ENCODE measurements at regions of chr9 and their contacts with region 1.

Region 1: GRCh38 chr9:122125158-122125508 is 32.0 kb upstream of the TTLL11 start:
- DNase-seq: peak; percentile 54 to 80 (median 76)
- ATAC-seq: peak; percentile 84
- H3K4me3 ChIP-seq: no peak overlapping the region
- H3K4me3 Mint-ChIP-seq: peak overlapping the region; percentile 21 to 89 (median 60)
- H3K27ac ChIP-seq: no peak overlapping the region
- H3K27ac Mint-ChIP-seq: no peak overlapping the region
- H3K4me1 ChIP-seq: no peaks in the 10 kb centered on the region
- H3K4me1 Mint-ChIP-seq: peaks cover 14 to 21% (median 17%) of the 10 kb centered on the region in 7 donors
- H3K27me3 ChIP-seq: no peaks in the 10 kb centered on the region
- H3K27me3 Mint-ChIP-seq: peaks cover 11 to 43% (median 27%) of the 10 kb centered on the region in 5 donors

Region 2: GRCh38 chr9:120742951-120743416 is 1382.1 kb before region 1 on chr9:
- CTCF ChIA-PET with region 1: no interaction called
- POLR2A ChIA-PET with region 1: no interaction called
- intact Hi-C with region 1: loop called in 1 of 2 experiments (anchors 10 kb)
- DNase-seq: peak in 5 of 9 donors; percentile 5 to 30 (median 13)
- ATAC-seq: peak; percentile 78
- H3K4me3 ChIP-seq: no peak overlapping the region
- H3K4me3 Mint-ChIP-seq: no peak overlapping the region
- H3K27ac ChIP-seq: no peak overlapping the region
- H3K27ac Mint-ChIP-seq: no peak overlapping the region
- H3K4me1 ChIP-seq: no peaks in the 10 kb centered on the region
- H3K4me1 Mint-ChIP-seq: peaks cover 0 to 4% (median 0%) of the 10 kb centered on the region in 7 donors
- H3K27me3 ChIP-seq: no peaks in the 10 kb centered on the region
- H3K27me3 Mint-ChIP-seq: no peaks in the 10 kb centered on the region

Region 3: DNA sequence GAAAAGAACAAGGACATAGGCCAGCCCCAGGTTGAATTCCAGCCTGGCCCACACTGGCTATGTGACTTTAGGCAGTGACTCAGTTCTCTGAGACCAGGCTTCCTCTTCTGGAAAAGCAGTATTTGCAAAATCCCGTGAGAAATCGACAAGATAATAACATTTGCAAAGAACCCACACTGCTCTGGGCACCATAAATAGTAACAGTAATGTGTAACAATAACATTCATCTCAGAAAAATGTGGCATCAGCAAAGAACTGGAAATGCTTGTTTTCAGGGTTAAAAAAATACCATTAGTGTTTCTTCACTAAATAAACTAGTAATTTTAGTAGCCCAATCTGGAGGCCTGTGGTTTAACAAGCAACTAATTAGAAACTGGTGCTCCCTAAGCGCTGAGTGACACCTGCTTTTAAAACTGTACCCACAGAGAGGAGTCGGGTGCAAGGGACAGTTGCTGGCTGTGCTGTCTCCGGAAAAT is 180.4 kb before region 1 on chr9:
- CTCF ChIA-PET with region 1: no interaction called
- POLR2A ChIA-PET with region 1: no interaction called
- intact Hi-C with region 1: no loop called
- DNase-seq: no peak
- ATAC-seq: no peak
- H3K4me3 ChIP-seq: no peak overlapping the region
- H3K4me3 Mint-ChIP-seq: no peak overlapping the region
- H3K27ac ChIP-seq: no peak overlapping the region
- H3K27ac Mint-ChIP-seq: no peak overlapping the region
- H3K4me1 ChIP-seq: no peaks in the 10 kb centered on the region
- H3K4me1 Mint-ChIP-seq: no peaks in the 10 kb centered on the region
- H3K27me3 ChIP-seq: no peaks in the 10 kb centered on the region
- H3K27me3 Mint-ChIP-seq: no peaks in the 10 kb centered on the region

Region 4: GRCh38 chr9:122087406-122088200 is 37.5 kb before region 1 on chr9:
- CTCF ChIA-PET with region 1: no interaction called
- POLR2A ChIA-PET with region 1: no interaction called
- intact Hi-C with region 1: no loop called
- DNase-seq: no peak
- ATAC-seq: no peak
- H3K4me3 ChIP-seq: no peak overlapping the region
- H3K4me3 Mint-ChIP-seq: no peak overlapping the region
- H3K27ac ChIP-seq: no peak overlapping the region
- H3K27ac Mint-ChIP-seq: peak overlapping the region in 1 of 9 donors; percentile 48
- H3K4me1 ChIP-seq: peaks cover 10 to 20% of the 10 kb centered on the region in 2 donors
- H3K4me1 Mint-ChIP-seq: peaks cover 22 to 49% (median 31%) of the 10 kb centered on the region in 7 donors
- H3K27me3 ChIP-seq: no peaks in the 10 kb centered on the region
- H3K27me3 Mint-ChIP-seq: no peaks in the 10 kb centered on the region

Region 5: GRCh38 chr9:122099271-122099869 is 25.8 kb before region 1 on chr9:
- CTCF ChIA-PET with region 1: interaction called, 59 read pairs
- POLR2A ChIA-PET with region 1: interaction called, 4 read pairs
- intact Hi-C with region 1: loop called (anchors 1 kb)
- DNase-seq: peak; percentile 54 to 79 (median 71)
- ATAC-seq: peak; percentile 86
- H3K4me3 ChIP-seq: no peak overlapping the region
- H3K4me3 Mint-ChIP-seq: peak overlapping the region in 7 of 10 donors; percentile 10 to 80 (median 48)
- H3K27ac ChIP-seq: no peak overlapping the region
- H3K27ac Mint-ChIP-seq: no peak overlapping the region
- H3K4me1 ChIP-seq: peaks cover 0 to 11% of the 10 kb centered on the region in 2 donors
- H3K4me1 Mint-ChIP-seq: peaks cover 7 to 19% (median 11%) of the 10 kb centered on the region in 7 donors
- H3K27me3 ChIP-seq: no peaks in the 10 kb centered on the region
- H3K27me3 Mint-ChIP-seq: peaks cover 0 to 29% (median 6%) of the 10 kb centered on the region in 5 donors

Region 6: GRCh38 chr9:122264360-122265148 is 139.4 kb after region 1 on chr9 and contains the starts of genes MRRF and RBM18:
- CTCF ChIA-PET with region 1: no interaction called
- POLR2A ChIA-PET with region 1: no interaction called
- intact Hi-C with region 1: loop called in 1 of 2 experiments (anchors 10 kb)
- DNase-seq: peak; percentile 80 to 93 (median 88)
- ATAC-seq: peak; percentile 92
- H3K4me3 ChIP-seq: peak within 1 kb of the TSS; percentile 93
- H3K4me3 Mint-ChIP-seq: peak within 1 kb of the TSS; percentile 88 to 100 (median 98)
- H3K27ac ChIP-seq: peak within 1 kb of the TSS; percentile 94
- H3K27ac Mint-ChIP-seq: peak within 1 kb of the TSS; percentile 76 to 100 (median 99)
- H3K4me1 ChIP-seq: peaks cover 18 to 25% of the 10 kb centered on the region in 2 donors
- H3K4me1 Mint-ChIP-seq: peaks cover 40 to 71% (median 61%) of the 10 kb centered on the region in 7 donors
- H3K27me3 ChIP-seq: no peaks in the 10 kb centered on the region
- H3K27me3 Mint-ChIP-seq: peaks cover 0 to 2% (median 0%) of the 10 kb centered on the region in 5 donors
- total RNA-seq, gene MRRF: 28.1 to 35.8 (median 33.3) TPM
- total RNA-seq, gene RBM18: 14.2 to 22.9 (median 15.8) TPM

Region 7: DNA sequence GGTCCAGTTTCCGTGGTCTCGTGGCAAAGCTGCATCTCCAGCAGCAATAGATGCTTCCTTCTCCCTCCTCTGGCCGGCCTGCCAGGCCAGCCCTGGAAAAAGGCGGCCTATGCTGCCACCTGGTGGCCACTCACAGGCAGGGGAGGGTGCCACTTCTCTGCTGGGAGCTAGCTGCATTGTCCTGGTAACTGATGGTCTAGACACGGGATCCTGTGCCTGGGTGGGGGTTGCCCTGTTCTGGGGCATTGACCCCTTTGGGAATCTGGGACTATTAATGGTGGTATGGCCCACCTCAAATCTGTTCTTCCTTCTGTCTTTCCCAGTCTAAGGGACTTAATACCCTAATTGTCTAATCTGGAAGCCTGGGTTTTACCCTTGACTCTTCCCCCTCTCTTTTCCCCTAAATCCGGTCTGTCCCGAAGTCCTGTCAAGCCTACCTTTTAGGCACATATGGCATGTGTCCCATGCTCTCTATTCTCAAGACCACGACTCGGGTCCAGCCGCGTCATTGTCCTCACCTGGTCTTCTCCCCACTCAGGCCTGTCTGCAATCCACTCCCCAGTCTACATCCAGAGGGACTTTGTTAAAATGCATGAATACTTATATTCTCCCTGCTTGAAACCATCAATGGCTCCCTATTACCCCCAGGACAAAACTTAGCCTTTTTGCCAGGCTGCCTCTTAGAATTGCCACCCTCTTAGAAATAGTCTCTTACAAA is 225.7 kb after region 1 on chr9:
- CTCF ChIA-PET with region 1: interaction called, 78 read pairs
- POLR2A ChIA-PET with region 1: no interaction called
- intact Hi-C with region 1: loop called (anchors 1 kb)
- DNase-seq: peak; percentile 46 to 84 (median 66)
- ATAC-seq: peak; percentile 88
- H3K4me3 ChIP-seq: no peak overlapping the region
- H3K4me3 Mint-ChIP-seq: peak overlapping the region in 1 of 10 donors; percentile 13
- H3K27ac ChIP-seq: no peak overlapping the region
- H3K27ac Mint-ChIP-seq: no peak overlapping the region
- H3K4me1 ChIP-seq: no peaks in the 10 kb centered on the region
- H3K4me1 Mint-ChIP-seq: peaks cover 7 to 19% (median 14%) of the 10 kb centered on the region in 7 donors
- H3K27me3 ChIP-seq: peaks cover 0 to 3% of the 10 kb centered on the region in 2 donors
- H3K27me3 Mint-ChIP-seq: peaks cover 28 to 39% (median 34%) of the 10 kb centered on the region in 5 donors

Region 8: DNA sequence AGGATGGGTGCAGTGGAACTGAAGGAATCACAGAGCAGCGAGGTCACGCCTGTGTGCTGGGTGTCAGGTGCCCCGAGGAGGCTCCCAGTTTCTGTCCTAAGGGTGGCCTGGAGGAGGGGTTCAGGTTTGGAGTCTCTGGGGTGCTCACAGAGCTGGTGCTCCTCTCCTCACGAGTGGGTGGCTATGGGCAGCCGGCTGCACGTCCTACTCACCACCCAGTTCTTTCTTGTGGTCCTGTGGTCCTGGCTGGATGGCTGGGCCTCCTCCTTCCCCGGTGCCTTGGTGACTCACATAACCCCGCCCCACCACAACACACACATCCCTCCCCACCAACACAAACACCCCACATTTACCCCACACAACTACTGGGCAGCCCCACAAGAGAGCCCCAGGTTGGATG is 235.8 kb after region 1 on chr9:
- CTCF ChIA-PET with region 1: no interaction called
- POLR2A ChIA-PET with region 1: no interaction called
- intact Hi-C with region 1: no loop called
- DNase-seq: no peak
- ATAC-seq: no peak
- H3K4me3 ChIP-seq: no peak overlapping the region
- H3K4me3 Mint-ChIP-seq: no peak overlapping the region
- H3K27ac ChIP-seq: no peak overlapping the region
- H3K27ac Mint-ChIP-seq: no peak overlapping the region
- H3K4me1 ChIP-seq: no peaks in the 10 kb centered on the region
- H3K4me1 Mint-ChIP-seq: no peaks in the 10 kb centered on the region
- H3K27me3 ChIP-seq: no peaks in the 10 kb centered on the region
- H3K27me3 Mint-ChIP-seq: peaks cover 0 to 16% (median 4%) of the 10 kb centered on the region in 5 donors

Region 9: DNA sequence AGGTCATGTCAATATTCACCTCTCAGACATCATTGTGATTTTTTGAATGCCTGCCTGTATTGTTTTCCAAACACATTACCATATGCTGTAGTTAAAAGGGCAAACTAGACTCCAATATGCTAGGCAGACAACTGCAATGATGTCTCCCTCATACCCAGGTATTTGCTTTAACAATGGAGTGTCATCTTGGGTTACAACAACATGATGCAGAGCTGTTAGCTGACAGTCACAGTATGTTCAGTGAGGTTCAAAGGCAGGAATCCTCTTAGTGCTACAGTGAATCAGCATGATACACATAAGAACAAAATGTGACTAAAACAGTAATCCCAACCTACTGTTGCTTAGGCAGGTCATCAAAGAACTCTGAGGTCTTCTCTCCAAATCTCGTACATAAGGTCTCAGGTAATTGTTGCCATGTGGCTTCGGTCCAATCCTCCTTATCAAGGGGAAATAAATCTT is 328.6 kb after region 1 on chr9:
- CTCF ChIA-PET with region 1: no interaction called
- POLR2A ChIA-PET with region 1: no interaction called
- intact Hi-C with region 1: loop called (anchors 1 to 2 kb)
- DNase-seq: no peak
- ATAC-seq: no peak
- H3K4me3 ChIP-seq: no peak overlapping the region
- H3K4me3 Mint-ChIP-seq: no peak overlapping the region
- H3K27ac ChIP-seq: no peak overlapping the region
- H3K27ac Mint-ChIP-seq: no peak overlapping the region
- H3K4me1 ChIP-seq: no peaks in the 10 kb centered on the region
- H3K4me1 Mint-ChIP-seq: no peaks in the 10 kb centered on the region
- H3K27me3 ChIP-seq: no peaks in the 10 kb centered on the region
- H3K27me3 Mint-ChIP-seq: peaks cover 0 to 26% (median 18%) of the 10 kb centered on the region in 5 donors

Region 10: DNA sequence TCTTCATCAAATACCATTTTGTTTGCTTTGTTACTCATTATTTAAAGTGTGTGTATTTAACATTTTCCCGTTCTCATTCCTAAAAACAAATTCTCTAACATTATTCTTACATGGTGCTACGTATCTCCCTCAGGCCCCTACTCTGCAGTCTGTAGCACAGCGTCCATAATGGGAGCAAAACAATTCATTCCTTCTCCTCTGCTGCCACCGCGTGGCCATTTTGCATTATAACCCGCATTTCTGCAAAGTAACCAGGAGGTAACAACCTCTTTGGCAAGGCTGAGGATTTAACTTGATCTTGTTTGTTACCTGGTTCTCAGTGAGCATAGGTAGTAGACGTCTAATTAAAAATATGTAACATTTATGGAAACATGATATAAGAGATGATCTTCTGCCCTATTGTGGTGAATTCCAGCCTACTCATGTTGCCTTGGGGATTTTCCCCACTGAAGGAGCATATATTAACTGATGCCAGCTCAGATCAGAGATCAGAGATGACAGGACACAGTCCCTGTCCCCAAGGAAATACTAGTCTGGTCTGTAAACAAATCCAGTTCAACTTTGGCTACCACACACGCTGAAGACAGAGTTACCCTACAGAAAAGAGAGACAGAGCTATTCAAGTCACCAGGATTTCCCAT is 685.3 kb after region 1 on chr9:
- CTCF ChIA-PET with region 1: interaction called, 25 read pairs
- POLR2A ChIA-PET with region 1: no interaction called
- intact Hi-C with region 1: loop called (anchors 1 kb)
- DNase-seq: peak; percentile 52 to 79 (median 72)
- ATAC-seq: peak; percentile 95
- H3K4me3 ChIP-seq: no peak overlapping the region
- H3K4me3 Mint-ChIP-seq: no peak overlapping the region
- H3K27ac ChIP-seq: no peak overlapping the region
- H3K27ac Mint-ChIP-seq: no peak overlapping the region
- H3K4me1 ChIP-seq: peaks cover 0 to under 1% of the 10 kb centered on the region in 2 donors
- H3K4me1 Mint-ChIP-seq: peaks cover 9 to 24% (median 16%) of the 10 kb centered on the region in 7 donors
- H3K27me3 ChIP-seq: no peaks in the 10 kb centered on the region
- H3K27me3 Mint-ChIP-seq: no peaks in the 10 kb centered on the region

Measured in naive thymus-derived CD4-positive, alpha-beta T cell (primary cell).